ENCODE measurements at regions of chr2 and their contacts with region 1.

Region 1: DNA sequence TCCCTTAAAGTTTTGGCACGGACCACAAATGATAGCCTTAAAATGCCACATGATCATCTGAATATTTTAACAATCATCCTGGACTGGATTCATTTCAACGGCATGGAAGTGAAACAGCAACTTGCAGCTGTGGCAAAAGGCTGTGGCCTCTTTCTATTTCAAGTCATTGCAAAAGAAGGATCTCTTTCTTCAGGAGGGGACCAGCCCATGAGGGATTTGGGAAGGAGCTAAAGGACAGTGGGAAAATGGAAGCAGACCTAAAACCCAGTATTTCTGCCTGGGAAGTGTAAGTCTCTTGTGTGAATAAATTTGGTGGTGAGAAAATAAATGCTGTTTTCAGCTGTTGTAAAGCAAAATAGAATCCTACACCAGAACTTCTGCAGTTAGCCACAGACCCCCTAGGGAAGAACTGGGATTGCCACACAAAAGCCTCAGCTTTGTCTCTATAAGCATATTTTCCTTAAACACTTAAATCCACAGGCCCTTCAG is 107.3 kb upstream of the ZFP36L2 start:
- DNase-seq: no peak
- ATAC-seq: peak; percentile 64

Region 2: DNA sequence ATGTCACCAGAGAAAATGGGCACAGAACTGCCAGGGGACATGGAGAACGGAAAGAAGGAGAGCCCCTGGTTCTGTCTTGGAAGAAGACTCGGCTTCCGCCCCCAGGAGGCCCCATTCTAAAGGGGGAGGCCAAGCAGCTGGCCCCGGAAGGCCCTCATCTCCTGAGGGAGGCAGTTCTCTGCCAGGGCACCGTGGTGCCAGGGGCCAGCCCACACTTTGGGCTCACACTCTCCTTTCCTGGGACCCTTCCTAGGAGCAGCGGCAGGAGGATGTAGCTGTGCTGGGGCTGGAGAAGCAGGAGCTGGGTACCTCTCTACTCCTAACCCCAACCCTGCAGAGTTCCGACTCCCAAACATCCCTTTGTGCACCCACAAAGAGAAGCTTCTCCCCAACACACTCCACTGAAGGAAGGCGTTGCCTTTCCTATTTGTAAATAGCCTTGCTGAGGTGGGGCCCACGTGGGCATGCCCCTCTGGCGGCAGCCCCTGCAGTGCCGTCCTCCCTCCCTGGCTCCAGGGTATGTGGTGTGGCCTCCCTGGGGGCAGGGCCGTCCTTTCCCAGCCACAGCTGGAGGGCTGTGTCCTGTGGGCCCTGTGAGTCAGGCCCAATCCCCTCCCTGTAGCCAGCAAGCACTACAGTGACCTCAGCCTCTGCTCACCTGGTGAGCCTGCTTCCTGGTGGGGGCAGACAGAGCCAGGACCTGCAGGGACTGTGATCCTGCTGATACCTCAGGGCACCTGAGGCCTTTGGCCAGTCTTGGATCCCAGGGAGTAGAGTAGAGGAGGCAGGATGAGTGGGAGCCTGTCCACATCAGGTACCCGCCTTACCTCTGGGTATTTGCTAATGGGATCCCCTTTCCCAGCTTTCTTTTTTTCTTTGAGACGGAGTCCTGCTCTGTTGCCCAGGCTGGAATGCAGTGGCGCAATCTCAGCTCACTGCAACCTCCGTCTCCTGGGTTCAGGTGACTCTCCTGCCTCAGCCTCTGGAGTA is 133.9 kb before region 1 on chr2:
- intact Hi-C with region 1: no loop called
- DNase-seq: no peak
- ATAC-seq: no peak

Region 3: GRCh38 chr2:43269074-43269572 is 64.6 kb before region 1 on chr2:
- intact Hi-C with region 1: loop called (anchors 2 kb)
- DNase-seq: peak; percentile 93
- ATAC-seq: peak; percentile 86

Region 4: GRCh38 chr2:43293744-43294695 is 39.7 kb before region 1 on chr2:
- intact Hi-C with region 1: no loop called
- DNase-seq: no peak
- ATAC-seq: peak; percentile 91